ENCODE measurements at regions of chr15 and their contacts with region 1.

Region 1: GRCh38 chr15:70679919-70680231 is 83.5 kb downstream of the UACA start:
- DNase-seq: no peak
- ATAC-seq: no peak
- H3K4me3 ChIP-seq: no peak overlapping the region
- H3K27ac ChIP-seq: no peak overlapping the region
- H3K4me1 ChIP-seq: no peaks in the 10 kb centered on the region
- CTCF ChIP-seq: no peak
- EP300 ChIP-seq: no peak
- POLR2A ChIP-seq: no peak
- RAD21 ChIP-seq: no peak

Region 2: DNA sequence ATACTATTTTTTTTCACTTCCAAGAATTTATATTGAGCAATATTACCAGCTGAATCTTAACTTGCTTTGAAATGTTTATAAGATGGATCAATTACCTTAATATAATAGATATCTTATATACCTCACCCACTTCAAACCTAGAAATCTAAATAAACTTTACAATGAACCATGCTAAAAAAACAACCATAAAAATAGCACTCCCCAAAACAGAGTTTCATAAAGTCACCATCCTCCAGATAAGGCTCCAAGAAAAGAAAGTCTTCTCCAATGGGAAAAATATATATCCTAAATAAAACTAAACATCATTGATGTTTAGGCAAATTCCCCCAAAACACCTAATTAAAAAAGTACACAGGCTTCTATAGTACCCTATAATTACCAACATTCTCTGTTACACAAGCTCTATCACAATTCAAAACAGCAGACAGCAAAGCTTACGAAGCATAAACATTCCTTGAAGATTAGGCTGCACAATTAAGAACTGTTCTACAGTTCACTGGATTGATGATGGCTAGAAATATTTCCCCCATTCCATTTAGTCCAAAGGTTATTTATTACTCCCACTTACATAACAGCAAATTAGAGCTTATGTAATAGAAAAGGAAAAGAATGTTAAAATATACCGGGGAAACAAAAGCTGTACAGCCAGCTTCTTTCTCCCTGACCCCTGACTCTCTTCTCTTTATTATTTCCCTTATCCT is 34.0 kb after region 1 on chr15:
- CTCF ChIA-PET with region 1: interaction called, 15 read pairs
- POLR2A ChIA-PET with region 1: interaction called, 3 read pairs
- DNase-seq: no peak
- ATAC-seq: peak in 1 of 2 experiments; percentile 30; a peak in 2 of 6 replicates
- H3K4me3 ChIP-seq: no peak overlapping the region
- H3K27ac ChIP-seq: peak overlapping the region; percentile 34 to 52
- H3K4me1 ChIP-seq: peaks cover 50% of the 10 kb centered on the region
- CTCF ChIP-seq: no peak
- EP300 ChIP-seq: no peak
- POLR2A ChIP-seq: no peak
- RAD21 ChIP-seq: no peak

Measured in A549 (cell line).